ENCODE measurements at regions of chr3 and their contacts with region 1.

Region 1: GRCh38 chr3:154334973-154335420 is 10.7 kb upstream of the DHX36 start:
- DNase-seq: peak; percentile 70
- ATAC-seq: peak; percentile 57
- H3K4me3 ChIP-seq: no peak overlapping the region
- H3K27ac ChIP-seq: no peak overlapping the region
- H3K4me1 ChIP-seq: no peaks in the 10 kb centered on the region
- H3K27me3 ChIP-seq: peaks cover 35% of the 10 kb centered on the region
- CTCF ChIP-seq: peak; percentile 58

Region 2: GRCh38 chr3:154522036-154522602 is 187.1 kb after region 1 on chr3:
- CTCF ChIA-PET with region 1: no interaction called
- POLR2A ChIA-PET with region 1: no interaction called
- intact Hi-C with region 1: loop called (anchors 5 kb)
- DNase-seq: no peak
- ATAC-seq: peak; percentile 45; the same call in 1 of the 2 replicates
- H3K4me3 ChIP-seq: no peak overlapping the region
- H3K27ac ChIP-seq: no peak overlapping the region
- H3K4me1 ChIP-seq: no peaks in the 10 kb centered on the region
- H3K27me3 ChIP-seq: peaks cover 3% of the 10 kb centered on the region; the same call in 1 of the 2 replicates
- CTCF ChIP-seq: no peak

Region 3: GRCh38 chr3:154730186-154730585 is 395.2 kb after region 1 on chr3:
- CTCF ChIA-PET with region 1: no interaction called
- POLR2A ChIA-PET with region 1: no interaction called
- intact Hi-C with region 1: loop called (anchors 1 kb)
- DNase-seq: no peak
- ATAC-seq: peak; percentile 50
- H3K4me3 ChIP-seq: no peak overlapping the region
- H3K27ac ChIP-seq: no peak overlapping the region
- H3K4me1 ChIP-seq: no peaks in the 10 kb centered on the region
- H3K27me3 ChIP-seq: peaks cover 13% of the 10 kb centered on the region
- CTCF ChIP-seq: no peak

Region 4: GRCh38 chr3:154745960-154746359 is 411.0 kb after region 1 on chr3:
- CTCF ChIA-PET with region 1: no interaction called
- POLR2A ChIA-PET with region 1: no interaction called
- intact Hi-C with region 1: loop called (anchors 1 kb)
- DNase-seq: peak; percentile 25
- ATAC-seq: 0 out of 2 replicates have a peak, but pooled peaks have one; percentile 40
- H3K4me3 ChIP-seq: no peak overlapping the region
- H3K27ac ChIP-seq: no peak overlapping the region
- H3K4me1 ChIP-seq: no peaks in the 10 kb centered on the region
- H3K27me3 ChIP-seq: peaks cover 12% of the 10 kb centered on the region; the same call in 1 of the 2 replicates
- CTCF ChIP-seq: peak; percentile 60